Endothelial cell of umbilical vein (primary cell): ENCODE measurements at regions of chr22 and their contacts with region 1.

Region 1: DNA sequence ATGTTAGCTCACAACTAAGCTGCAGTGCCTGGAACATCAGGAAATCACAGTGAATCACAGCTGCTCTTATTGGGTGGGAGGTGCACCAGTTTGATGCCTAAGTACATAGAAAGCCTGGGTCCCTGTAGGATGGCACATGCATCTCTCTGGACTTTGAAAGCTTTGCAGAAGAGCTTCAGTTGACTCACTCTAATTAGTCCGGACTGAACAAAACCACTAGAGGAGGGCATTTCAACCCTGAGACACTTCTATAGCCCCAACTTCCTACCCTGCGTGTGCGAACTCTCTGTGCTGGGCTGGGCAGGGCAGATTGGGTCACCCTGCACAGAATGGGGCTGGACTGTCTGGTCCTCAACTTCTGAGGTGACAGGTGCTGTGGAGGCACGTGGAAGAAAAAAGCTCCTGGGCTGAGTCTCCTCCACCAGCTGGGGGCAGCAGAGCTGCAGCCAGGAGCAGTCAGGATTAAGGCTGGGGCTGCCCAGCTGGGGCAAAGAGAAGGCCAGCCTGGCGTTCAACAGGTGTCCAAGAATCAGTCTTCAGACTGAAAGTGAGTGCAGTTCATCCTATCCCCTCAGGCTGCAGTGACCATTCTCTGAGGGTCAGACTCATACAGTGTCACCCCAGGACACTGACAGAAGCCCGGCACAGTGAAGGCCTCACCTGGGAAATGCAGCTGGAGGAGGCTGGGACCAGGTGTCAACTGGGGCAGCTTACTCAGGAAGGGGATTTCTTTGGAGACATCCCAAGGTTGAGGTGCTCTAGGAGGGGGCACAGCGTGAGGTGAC is 22.1 kb downstream of the GGTLC2 start:
- DNase-seq: peak; percentile 10
- H3K4me3 ChIP-seq: no peak overlapping the region
- H3K27ac ChIP-seq: no peak overlapping the region
- H3K4me1 ChIP-seq: no peaks in the 10 kb centered on the region
- H3K27me3 ChIP-seq: peaks cover 0 to 1% of the 10 kb centered on the region in 2 experiments
- CTCF ChIP-seq: peak; percentile 43 to 72
- POLR2A ChIP-seq: no peak

Region 2: DNA sequence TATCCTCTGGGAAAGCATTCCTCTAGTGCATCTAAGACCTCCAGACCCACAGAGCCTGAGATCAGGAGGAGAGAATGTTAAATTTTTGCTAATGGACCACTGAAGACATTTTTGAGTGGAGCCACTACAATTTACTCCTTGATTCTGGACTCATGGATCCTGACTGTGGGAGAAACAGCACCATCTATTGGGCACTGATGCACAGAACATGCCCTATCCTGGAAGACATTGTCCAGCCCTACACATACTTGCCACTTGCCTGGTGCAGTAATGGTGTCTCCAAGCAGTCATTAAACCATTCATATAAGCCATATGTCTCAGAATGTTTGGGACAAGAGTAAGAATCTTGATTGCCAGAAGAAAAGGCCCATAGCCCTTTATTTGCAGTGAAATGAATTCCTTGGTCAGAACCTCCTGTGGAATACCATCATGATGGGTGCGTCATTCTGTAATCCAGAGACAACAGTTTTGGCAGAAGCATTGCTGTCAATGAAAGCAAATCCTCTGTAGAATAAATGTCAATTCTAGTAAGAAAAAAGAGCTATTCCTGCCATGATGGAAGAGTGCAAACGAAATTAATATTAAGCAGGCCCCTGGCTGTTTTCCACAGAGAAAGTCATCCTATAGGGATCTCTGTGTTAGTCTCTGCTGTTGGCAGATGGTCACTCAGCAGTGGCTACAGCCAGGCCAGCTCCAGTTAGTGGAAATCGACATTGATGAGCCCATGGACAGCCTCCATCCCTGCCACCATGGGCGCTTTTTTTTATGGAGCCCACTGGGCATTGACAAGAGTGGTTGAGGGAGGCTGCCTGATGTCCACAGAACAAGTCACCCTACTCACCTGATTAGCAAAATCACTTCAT is 21.4 kb after region 1 on chr22:
- CTCF ChIA-PET with region 1: interaction called, 21 read pairs
- POLR2A ChIA-PET with region 1: no interaction called
- dilution Hi-C with region 1: no loop called
- intact Hi-C with region 1: no loop called
- DNase-seq: peak; percentile 67
- H3K4me3 ChIP-seq: no peak overlapping the region
- H3K27ac ChIP-seq: no peak overlapping the region
- H3K4me1 ChIP-seq: peaks cover 2% of the 10 kb centered on the region
- H3K27me3 ChIP-seq: peaks cover 2 to 10% of the 10 kb centered on the region in 2 experiments
- CTCF ChIP-seq: peak; percentile 70 to 73
- POLR2A ChIP-seq: no peak